ENCODE measurements at regions of chr3 and their contacts with region 1.

Region 1: GRCh38 chr3:167734498-167735232 is at the start of gene PDCD10:
- DNase-seq: peak; percentile 78 to 98 (median 84)
- ATAC-seq: peak; percentile 74
- H3K4me3 ChIP-seq: peak within 1 kb of the TSS; percentile 77
- H3K27ac ChIP-seq: peak within 1 kb of the TSS; percentile 96
- H3K4me1 ChIP-seq: peaks cover 0 to 7% of the 10 kb centered on the region in 2 experiments; a peak in 3 of 5 replicates
- H3K27me3 ChIP-seq: no peaks in the 10 kb centered on the region
- CTCF ChIP-seq: 0 out of 6 replicates have a peak, but pooled peaks of 1 of the 3 experiments have one; percentile 10
- EP300 ChIP-seq: no peak
- POLR2A ChIP-seq: peak; percentile 94
- RAD21 ChIP-seq: no peak
- polyA plus RNA-seq, gene PDCD10: 423 to 476 TPM

Region 2: DNA sequence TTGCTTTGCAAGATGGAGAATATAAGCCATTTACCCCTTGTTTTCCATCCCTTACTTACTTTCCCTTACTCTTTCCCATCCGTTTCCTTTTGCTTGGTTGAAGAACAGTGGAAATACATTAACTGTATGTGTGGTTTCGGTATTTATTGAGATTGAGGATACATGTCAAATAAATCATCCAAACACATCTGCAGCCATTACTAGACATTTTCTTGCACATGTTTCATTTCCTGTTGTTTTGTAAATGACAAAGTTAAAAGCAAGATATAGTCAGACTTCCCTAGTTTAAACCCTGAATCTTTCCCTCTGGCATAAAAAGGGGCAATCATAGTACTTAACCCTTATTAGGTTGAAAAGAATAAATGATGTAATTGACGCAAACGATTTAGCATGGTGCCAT is 1815.4 kb before region 1 on chr3:
- CTCF ChIA-PET with region 1: no interaction called
- POLR2A ChIA-PET with region 1: no interaction called
- in situ Hi-C with region 1: no loop called
- intact Hi-C with region 1: loop called (anchors 5 kb)
- DNase-seq: peak in 2 of 4 experiments; percentile 7 to 18
- ATAC-seq: peak; percentile 4
- H3K4me3 ChIP-seq: peak overlapping the region; percentile 65
- H3K27ac ChIP-seq: peak overlapping the region; percentile 83
- H3K4me1 ChIP-seq: peaks cover 7 to 8% of the 10 kb centered on the region in 2 experiments; a peak in 3 of 5 replicates
- H3K27me3 ChIP-seq: no peaks in the 10 kb centered on the region
- CTCF ChIP-seq: no peak
- EP300 ChIP-seq: no peak
- POLR2A ChIP-seq: no peak
- RAD21 ChIP-seq: no peak

Region 3: DNA sequence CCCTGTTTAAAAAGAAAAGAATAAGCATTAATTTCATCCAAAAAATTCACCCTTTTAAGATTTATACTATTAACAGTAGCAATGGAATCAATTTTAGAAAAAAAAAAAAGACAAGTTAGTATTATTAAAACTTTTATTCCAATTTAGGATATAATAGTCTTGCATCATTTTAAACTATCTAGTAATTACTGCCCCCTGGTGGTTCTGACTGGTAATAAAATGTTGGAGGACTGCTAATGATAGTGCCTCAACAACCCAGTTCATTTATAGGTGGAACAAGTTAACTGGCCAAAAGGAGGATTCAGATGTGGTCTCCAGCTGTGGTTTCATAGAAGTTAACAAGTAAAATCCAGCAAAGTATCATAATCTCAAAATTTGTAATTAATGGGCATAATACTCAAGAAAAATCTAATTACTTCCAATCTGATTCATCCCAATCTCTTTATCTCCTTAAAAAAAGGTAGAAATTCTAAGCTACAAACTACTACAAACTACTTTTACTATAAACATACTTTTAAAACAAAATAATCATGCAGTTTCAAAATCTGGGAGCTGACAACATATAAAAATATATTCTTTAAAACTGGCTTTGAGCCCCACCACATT is 50.2 kb before region 1 on chr3:
- CTCF ChIA-PET with region 1: no interaction called
- POLR2A ChIA-PET with region 1: no interaction called
- in situ Hi-C with region 1: no loop called
- intact Hi-C with region 1: loop called (anchors 5 kb)
- DNase-seq: peak; percentile 39 to 78 (median 44)
- ATAC-seq: peak; percentile 79
- H3K4me3 ChIP-seq: no peak overlapping the region
- H3K27ac ChIP-seq: no peak overlapping the region
- H3K4me1 ChIP-seq: no peaks in the 10 kb centered on the region
- H3K27me3 ChIP-seq: no peaks in the 10 kb centered on the region
- CTCF ChIP-seq: peak; percentile 39 to 58 (median 50); a peak in 4 of 6 replicates
- EP300 ChIP-seq: no peak
- POLR2A ChIP-seq: no peak
- RAD21 ChIP-seq: peak; percentile 42 to 45

Region 4: DNA sequence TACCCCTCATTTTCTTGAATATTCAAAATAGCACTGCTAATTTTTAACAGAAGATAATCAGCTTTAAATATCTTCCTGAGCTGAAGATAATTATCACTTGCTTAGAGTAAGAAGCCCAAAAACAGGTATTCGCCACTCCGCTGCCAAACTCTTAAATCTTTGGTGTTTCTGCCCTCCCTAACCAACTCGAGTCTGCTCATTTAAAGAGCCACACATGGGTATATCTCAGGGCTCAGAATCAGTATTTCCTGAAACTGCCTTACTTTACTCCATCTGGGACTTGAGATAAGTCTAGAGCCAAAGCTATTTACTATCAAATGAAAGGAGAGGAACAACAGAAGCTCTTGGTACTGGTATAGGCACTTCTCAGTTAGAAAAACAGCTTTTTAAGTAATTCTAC is 10.8 kb before region 1 on chr3:
- CTCF ChIA-PET with region 1: no interaction called
- POLR2A ChIA-PET with region 1: interaction called, 6 read pairs
- in situ Hi-C with region 1: no loop called
- intact Hi-C with region 1: loop called (anchors 1 kb)
- DNase-seq: peak in 2 of 4 experiments; percentile 67 to 85
- ATAC-seq: peak; percentile 79
- H3K4me3 ChIP-seq: peak overlapping the region; percentile 20; the same call in 1 of the 2 replicates
- H3K27ac ChIP-seq: peak overlapping the region; percentile 72
- H3K4me1 ChIP-seq: peaks cover 17 to 56% of the 10 kb centered on the region in 2 experiments
- H3K27me3 ChIP-seq: no peaks in the 10 kb centered on the region
- CTCF ChIP-seq: no peak
- EP300 ChIP-seq: peak; percentile 92
- POLR2A ChIP-seq: no peak; the same call in 1 of the 2 replicates
- RAD21 ChIP-seq: no peak

Region 5: DNA sequence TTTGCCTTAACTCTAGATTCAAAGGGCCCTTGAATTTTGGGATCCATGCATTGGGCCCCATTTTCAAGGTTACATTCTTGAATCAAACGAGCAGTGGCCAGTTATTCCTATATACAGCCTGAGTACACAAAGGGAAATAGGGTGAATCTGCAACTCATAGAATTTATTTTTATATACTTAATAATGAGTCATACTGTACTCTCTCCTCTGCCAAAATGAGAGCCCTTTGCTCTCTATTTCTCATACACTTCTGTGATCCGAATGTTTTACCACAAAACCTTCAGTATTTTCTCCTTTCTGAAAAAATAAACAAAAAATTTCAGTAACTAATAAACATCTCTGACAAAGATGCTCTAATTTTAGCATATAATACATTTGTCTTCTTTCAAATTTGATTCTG is 117.6 kb after region 1 on chr3:
- CTCF ChIA-PET with region 1: no interaction called
- POLR2A ChIA-PET with region 1: no interaction called
- in situ Hi-C with region 1: no loop called
- intact Hi-C with region 1: no loop called
- DNase-seq: no peak
- ATAC-seq: no peak
- H3K4me3 ChIP-seq: no peak overlapping the region
- H3K27ac ChIP-seq: no peak overlapping the region
- H3K4me1 ChIP-seq: no peaks in the 10 kb centered on the region
- H3K27me3 ChIP-seq: no peaks in the 10 kb centered on the region
- CTCF ChIP-seq: no peak
- EP300 ChIP-seq: no peak
- POLR2A ChIP-seq: no peak
- RAD21 ChIP-seq: no peak

Region 6: DNA sequence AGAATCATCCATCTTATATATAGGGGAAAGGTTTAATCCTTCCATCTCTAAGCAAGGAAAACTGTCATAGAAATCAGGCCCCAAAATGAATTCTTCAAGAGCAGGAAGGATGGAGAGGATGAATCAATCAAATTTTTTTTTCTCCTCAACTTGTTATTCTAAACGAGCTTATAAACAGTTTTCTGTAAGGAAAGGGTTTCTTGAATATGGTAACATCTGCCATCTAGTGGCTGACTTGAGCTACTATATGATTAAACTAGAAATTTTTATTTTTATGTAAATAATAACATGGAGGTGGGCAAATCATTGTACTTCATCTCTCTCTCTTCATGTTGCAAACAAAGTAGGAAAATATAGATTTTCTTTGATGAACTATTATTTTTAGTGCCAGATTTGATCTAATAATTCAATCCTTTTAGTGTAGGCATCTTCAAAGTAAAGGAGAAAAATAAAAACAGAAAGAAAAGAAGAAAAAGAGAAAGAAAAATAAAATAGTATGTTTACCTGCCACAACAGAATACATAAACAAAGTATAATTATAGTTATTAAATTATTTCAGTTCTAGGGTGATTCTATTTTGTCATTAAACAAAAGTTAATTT is 147.5 kb after region 1 on chr3:
- CTCF ChIA-PET with region 1: no interaction called
- POLR2A ChIA-PET with region 1: no interaction called
- in situ Hi-C with region 1: no loop called
- intact Hi-C with region 1: loop called (anchors 5 kb)
- DNase-seq: peak; percentile 20 to 51 (median 34)
- ATAC-seq: peak; percentile 80
- H3K4me3 ChIP-seq: no peak overlapping the region
- H3K27ac ChIP-seq: no peak overlapping the region
- H3K4me1 ChIP-seq: no peaks in the 10 kb centered on the region
- H3K27me3 ChIP-seq: no peaks in the 10 kb centered on the region
- CTCF ChIP-seq: peak; percentile 34 to 68 (median 34); a peak in 3 of 6 replicates
- EP300 ChIP-seq: no peak
- POLR2A ChIP-seq: no peak
- RAD21 ChIP-seq: peak; percentile 77 to 83

Region 7: DNA sequence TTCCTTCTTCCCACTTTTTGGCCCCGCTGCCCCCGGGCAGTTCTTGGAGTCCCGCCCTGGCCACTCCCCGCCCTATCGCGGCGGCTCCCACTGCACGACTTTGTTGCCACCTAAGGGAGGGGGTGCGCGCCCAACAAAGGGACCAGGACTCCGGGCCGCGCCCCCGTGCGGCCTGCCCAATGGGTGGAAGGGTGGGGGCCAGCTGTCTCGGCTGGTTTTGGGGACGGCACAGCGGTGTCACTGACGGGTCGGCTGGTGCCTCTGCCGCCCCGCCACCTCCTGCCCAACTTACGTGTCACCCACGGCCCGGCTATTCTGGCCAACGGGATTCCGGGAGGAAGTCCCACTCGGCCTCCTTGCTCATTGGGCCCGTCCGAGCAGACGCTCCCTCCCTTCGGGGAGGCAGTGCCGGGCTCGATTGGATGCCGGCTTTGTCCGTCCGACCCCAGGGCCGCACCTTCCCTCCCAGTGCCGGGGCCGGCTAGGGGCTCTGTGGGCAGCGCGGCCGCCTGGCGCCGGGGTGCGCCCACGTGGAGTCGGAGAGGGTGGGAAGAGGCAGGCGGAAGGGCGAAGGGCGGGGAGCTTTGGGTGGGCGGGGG is 361.0 kb after region 1 on chr3 and contains the start of gene GOLIM4:
- CTCF ChIA-PET with region 1: no interaction called
- POLR2A ChIA-PET with region 1: no interaction called
- in situ Hi-C with region 1: no loop called
- intact Hi-C with region 1: loop called (anchors 2 kb)
- DNase-seq: peak; percentile 90 to 96 (median 92)
- ATAC-seq: peak; percentile 91
- H3K4me3 ChIP-seq: peak within 1 kb of the TSS; percentile 77
- H3K27ac ChIP-seq: peak within 1 kb of the TSS; percentile 96
- H3K4me1 ChIP-seq: peaks cover 13 to 31% of the 10 kb centered on the region in 2 experiments
- H3K27me3 ChIP-seq: no peaks in the 10 kb centered on the region
- CTCF ChIP-seq: peak in 2 of 3 experiments; percentile 22 to 30; a peak in 3 of 6 replicates
- EP300 ChIP-seq: no peak
- POLR2A ChIP-seq: peak; percentile 70
- RAD21 ChIP-seq: peak; percentile 14 to 16; a peak in 1 of 4 replicates
- polyA plus RNA-seq, gene GOLIM4: 11.3 to 12.0 TPM

Region 8: GRCh38 chr3:168156479-168156878 is 421.8 kb after region 1 on chr3:
- CTCF ChIA-PET with region 1: no interaction called
- POLR2A ChIA-PET with region 1: no interaction called
- in situ Hi-C with region 1: no loop called
- intact Hi-C with region 1: loop called (anchors 5 kb)
- DNase-seq: no peak
- ATAC-seq: no peak
- H3K4me3 ChIP-seq: no peak overlapping the region
- H3K27ac ChIP-seq: peak overlapping the region; percentile 79
- H3K4me1 ChIP-seq: peaks cover 12 to 35% of the 10 kb centered on the region in 2 experiments
- H3K27me3 ChIP-seq: no peaks in the 10 kb centered on the region
- CTCF ChIP-seq: no peak
- EP300 ChIP-seq: no peak
- POLR2A ChIP-seq: no peak
- RAD21 ChIP-seq: no peak